ENCODE measurements at regions of chr3 and their contacts with region 1.

Region 1: GRCh38 chr3:37974121-37975083 is 16.2 kb upstream of the VILL start:
- DNase-seq: peak; percentile 54
- H3K4me3 Mint-ChIP-seq: no peak overlapping the region
- H3K27ac Mint-ChIP-seq: no peak overlapping the region
- H3K4me1 Mint-ChIP-seq: peaks cover 6% of the 10 kb centered on the region
- H3K27me3 Mint-ChIP-seq: no peaks in the 10 kb centered on the region

Region 2: DNA sequence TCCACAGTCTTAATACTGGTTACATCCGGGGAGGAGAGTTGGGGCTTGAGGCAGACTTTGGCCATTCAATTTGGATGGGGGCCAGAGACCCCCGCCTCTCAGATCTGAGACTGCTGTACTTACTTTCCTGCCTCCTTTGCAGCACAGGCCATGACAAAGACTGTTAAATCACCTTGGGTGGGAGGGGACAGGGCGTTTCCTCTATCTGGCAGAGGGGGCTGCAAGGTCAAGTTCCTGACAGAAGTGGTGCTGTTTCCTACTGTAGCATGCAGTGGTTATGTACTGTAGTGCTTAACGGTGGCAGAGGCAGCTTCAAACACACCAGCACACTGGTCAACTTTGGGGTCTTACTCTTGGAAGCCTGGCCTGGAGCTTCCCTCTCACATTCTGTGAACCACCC is 538.8 kb before region 1 on chr3:
- intact Hi-C with region 1: no loop called
- DNase-seq: no peak
- H3K4me3 Mint-ChIP-seq: no peak overlapping the region
- H3K27ac Mint-ChIP-seq: no peak overlapping the region
- H3K4me1 Mint-ChIP-seq: peaks cover 15% of the 10 kb centered on the region
- H3K27me3 Mint-ChIP-seq: peaks cover 3% of the 10 kb centered on the region

Region 3: DNA sequence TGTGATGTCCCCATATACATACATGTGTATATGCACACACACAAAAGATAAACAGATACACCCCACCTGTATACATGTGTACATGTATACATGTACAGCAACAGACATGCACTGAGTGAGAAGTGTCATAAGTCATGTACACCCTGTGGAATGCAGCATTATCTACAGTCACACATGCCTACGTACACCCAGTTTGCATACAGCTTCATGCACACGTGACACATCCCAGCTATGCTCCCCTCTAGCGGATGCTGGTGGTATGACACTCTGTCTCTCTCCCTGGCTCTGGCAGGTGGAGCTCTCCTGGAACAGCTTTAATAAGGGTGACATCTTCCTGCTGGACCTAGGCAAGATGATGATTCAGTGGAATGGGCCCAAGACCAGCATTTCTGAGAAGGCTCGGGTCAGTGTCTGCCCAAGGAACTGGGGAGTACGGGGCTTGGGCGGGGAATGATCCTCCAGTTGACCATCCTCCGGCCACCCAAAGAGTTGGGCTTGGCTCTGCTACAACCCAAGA is 22.4 kb after region 1 on chr3:
- intact Hi-C with region 1: loop called (anchors 1 kb)
- DNase-seq: peak; percentile 80
- H3K4me3 Mint-ChIP-seq: peak overlapping the region; percentile 9
- H3K27ac Mint-ChIP-seq: peak overlapping the region; percentile 70
- H3K4me1 Mint-ChIP-seq: peaks cover 61% of the 10 kb centered on the region
- H3K27me3 Mint-ChIP-seq: no peaks in the 10 kb centered on the region

Region 4: DNA sequence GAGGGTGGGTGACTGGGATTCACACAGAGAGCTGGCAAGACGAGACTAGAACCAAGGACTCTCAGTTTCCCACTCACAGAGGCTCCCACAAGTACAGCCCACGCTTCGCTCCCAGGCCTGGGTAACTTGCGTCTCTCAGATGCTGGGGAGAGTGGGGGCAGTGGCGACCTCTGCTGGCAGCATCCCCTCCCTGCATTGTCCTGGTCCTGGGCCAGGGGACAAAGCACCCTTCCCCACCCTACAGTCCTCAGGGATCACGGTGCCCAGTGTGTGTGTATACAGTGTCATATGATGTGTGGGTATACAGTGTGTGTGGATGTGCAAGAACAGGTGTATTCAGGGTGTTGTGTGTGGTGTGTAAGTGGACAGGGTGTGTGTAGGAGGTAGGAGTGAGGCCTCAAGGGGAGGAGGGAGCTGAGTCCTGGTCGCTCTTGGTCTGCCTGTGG is 29.0 kb after region 1 on chr3:
- intact Hi-C with region 1: loop called (anchors 1 kb)
- DNase-seq: peak; percentile 38
- H3K4me3 Mint-ChIP-seq: no peak overlapping the region
- H3K27ac Mint-ChIP-seq: no peak overlapping the region
- H3K4me1 Mint-ChIP-seq: peaks cover 32% of the 10 kb centered on the region
- H3K27me3 Mint-ChIP-seq: no peaks in the 10 kb centered on the region

Region 5: DNA sequence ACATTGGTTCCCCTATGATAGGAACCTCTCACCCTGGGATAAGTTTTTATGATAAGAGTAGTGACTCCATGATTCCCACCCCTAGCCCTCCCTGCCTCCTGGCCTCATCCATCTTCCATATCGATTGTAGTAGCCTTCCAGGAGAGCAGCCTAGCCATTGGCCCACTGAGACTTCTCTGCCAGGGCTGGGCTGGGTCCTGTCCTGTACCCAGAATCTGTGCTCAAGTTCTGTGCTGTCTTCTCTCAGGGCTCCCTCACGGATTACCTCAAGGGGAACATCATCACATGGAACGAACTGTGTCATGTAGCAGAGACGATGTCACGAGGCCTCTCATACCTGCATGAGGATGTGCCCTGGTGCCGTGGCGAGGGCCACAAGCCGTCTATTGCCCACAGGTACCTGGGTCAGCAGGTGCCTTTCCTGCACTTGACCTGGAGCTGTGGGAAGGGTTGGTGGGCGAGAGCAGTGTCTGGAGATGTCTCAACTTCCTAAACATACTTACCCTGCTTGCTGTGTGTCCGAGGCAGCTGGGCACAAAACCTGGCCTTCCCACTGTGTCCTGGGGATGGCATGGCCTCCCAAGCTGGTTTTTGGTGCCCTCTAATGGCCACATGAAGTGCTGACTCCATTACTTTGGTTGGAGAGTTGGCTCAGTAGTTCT is 505.2 kb after region 1 on chr3:
- intact Hi-C with region 1: loop called (anchors 1 kb)
- DNase-seq: peak; percentile 21
- H3K4me3 Mint-ChIP-seq: no peak overlapping the region
- H3K27ac Mint-ChIP-seq: no peak overlapping the region
- H3K4me1 Mint-ChIP-seq: no peaks in the 10 kb centered on the region
- H3K27me3 Mint-ChIP-seq: no peaks in the 10 kb centered on the region